Activated CD4-positive, alpha-beta T cell treated with anti-CD3 and anti-CD28 coated beads, Interleukin-2, amount 10 ng/mL, durations not matched to agents 24 days and 14 days (primary cell): ENCODE measurements at regions of chr13 and their contacts with region 1.

Region 1: GRCh38 chr13:46655377-46656180 is 102.6 kb downstream of the LRCH1 start:
- DNase-seq: peak; percentile 65
- H3K4me3 Mint-ChIP-seq: peak overlapping the region; percentile 55
- H3K27ac Mint-ChIP-seq: peak overlapping the region; percentile 34
- H3K4me1 Mint-ChIP-seq: peaks cover 31% of the 10 kb centered on the region
- H3K27me3 Mint-ChIP-seq: no peaks in the 10 kb centered on the region

Region 2: DNA sequence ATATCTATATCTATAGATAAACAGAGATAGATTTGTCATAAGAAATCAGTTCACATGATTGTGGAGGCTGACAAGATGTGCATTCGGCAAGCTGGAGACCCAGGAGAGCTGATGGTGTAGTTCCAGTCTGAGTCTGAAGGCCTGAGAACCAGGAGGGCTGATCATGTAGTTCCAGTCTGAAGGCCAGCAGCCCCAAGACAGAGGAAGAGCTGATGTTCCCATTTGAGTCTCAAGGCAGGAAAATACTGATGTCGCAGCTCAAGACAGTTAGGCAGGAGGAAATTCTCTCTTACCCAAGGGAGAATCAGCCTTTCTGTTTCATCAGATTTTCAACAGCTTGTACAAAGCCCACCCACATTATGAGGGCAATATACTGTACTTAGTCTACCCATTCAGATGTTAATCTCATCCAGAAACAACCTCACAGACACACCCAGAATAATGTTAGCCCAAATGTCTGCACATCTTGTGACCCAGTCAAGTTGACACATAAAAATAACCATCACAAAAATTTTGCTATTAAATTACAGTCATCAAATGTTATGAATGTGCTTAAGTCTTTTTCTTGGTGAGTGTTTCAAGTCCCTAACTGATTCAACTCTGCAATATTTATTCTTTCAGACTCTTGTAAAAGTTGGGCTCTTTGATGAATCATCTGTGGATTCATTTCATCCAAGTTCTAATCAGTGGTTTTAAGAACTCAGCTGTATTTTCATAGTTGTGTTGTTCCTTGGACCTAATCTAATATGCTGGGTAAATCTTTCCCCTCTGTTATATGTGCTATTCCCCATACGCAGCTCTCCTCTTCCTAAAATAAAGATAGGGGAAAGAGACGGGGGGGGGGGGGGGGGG is 125.3 kb before region 1 on chr13:
- intact Hi-C with region 1: no loop called
- DNase-seq: no peak
- H3K4me3 Mint-ChIP-seq: no peak overlapping the region
- H3K27ac Mint-ChIP-seq: peak overlapping the region; percentile 68
- H3K4me1 Mint-ChIP-seq: peaks cover 22% of the 10 kb centered on the region
- H3K27me3 Mint-ChIP-seq: peaks cover 6% of the 10 kb centered on the region

Region 3: GRCh38 chr13:46643165-46643777 is 12.3 kb before region 1 on chr13:
- intact Hi-C with region 1: loop called (anchors 1 kb)
- DNase-seq: no peak
- H3K4me3 Mint-ChIP-seq: no peak overlapping the region
- H3K27ac Mint-ChIP-seq: no peak overlapping the region
- H3K4me1 Mint-ChIP-seq: peaks cover 34% of the 10 kb centered on the region
- H3K27me3 Mint-ChIP-seq: no peaks in the 10 kb centered on the region

Region 4: GRCh38 chr13:46679369-46680120 is 24.0 kb after region 1 on chr13:
- intact Hi-C with region 1: loop called (anchors 1 kb)
- DNase-seq: peak; percentile 86
- H3K4me3 Mint-ChIP-seq: no peak overlapping the region
- H3K27ac Mint-ChIP-seq: no peak overlapping the region
- H3K4me1 Mint-ChIP-seq: peaks cover 26% of the 10 kb centered on the region
- H3K27me3 Mint-ChIP-seq: no peaks in the 10 kb centered on the region

Region 5: DNA sequence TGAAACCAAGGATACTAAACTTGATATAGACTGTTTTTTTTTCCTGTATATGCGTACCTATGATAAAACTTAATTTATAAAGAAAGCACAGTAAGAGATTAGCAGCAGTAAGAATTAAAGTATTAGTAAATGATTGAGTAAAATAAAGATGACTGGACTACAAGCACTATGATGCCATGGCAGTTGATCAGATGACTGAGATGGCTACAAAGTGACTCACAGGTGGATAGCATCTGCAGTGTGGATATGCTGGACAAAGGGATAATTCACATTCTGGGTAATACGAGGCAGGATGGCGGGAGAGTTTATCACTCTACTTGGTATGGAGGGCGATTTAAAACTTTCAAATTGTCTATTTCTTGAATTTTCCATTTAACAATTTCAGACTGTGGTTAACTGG is 229.4 kb after region 1 on chr13:
- intact Hi-C with region 1: no loop called
- DNase-seq: no peak
- H3K4me3 Mint-ChIP-seq: no peak overlapping the region
- H3K27ac Mint-ChIP-seq: no peak overlapping the region
- H3K4me1 Mint-ChIP-seq: no peaks in the 10 kb centered on the region
- H3K27me3 Mint-ChIP-seq: peaks cover 28% of the 10 kb centered on the region

Region 6: GRCh38 chr13:46975173-46975572 is 319.6 kb after region 1 on chr13:
- intact Hi-C with region 1: no loop called
- DNase-seq: no peak
- H3K4me3 Mint-ChIP-seq: no peak overlapping the region
- H3K27ac Mint-ChIP-seq: no peak overlapping the region
- H3K4me1 Mint-ChIP-seq: no peaks in the 10 kb centered on the region
- H3K27me3 Mint-ChIP-seq: no peaks in the 10 kb centered on the region

Region 7: GRCh38 chr13:47334173-47334572 is 678.6 kb after region 1 on chr13:
- intact Hi-C with region 1: no loop called
- DNase-seq: no peak
- H3K4me3 Mint-ChIP-seq: no peak overlapping the region
- H3K27ac Mint-ChIP-seq: no peak overlapping the region
- H3K4me1 Mint-ChIP-seq: no peaks in the 10 kb centered on the region
- H3K27me3 Mint-ChIP-seq: no peaks in the 10 kb centered on the region